ENCODE measurements at regions of chr20 and their contacts with region 1.

Region 1: DNA sequence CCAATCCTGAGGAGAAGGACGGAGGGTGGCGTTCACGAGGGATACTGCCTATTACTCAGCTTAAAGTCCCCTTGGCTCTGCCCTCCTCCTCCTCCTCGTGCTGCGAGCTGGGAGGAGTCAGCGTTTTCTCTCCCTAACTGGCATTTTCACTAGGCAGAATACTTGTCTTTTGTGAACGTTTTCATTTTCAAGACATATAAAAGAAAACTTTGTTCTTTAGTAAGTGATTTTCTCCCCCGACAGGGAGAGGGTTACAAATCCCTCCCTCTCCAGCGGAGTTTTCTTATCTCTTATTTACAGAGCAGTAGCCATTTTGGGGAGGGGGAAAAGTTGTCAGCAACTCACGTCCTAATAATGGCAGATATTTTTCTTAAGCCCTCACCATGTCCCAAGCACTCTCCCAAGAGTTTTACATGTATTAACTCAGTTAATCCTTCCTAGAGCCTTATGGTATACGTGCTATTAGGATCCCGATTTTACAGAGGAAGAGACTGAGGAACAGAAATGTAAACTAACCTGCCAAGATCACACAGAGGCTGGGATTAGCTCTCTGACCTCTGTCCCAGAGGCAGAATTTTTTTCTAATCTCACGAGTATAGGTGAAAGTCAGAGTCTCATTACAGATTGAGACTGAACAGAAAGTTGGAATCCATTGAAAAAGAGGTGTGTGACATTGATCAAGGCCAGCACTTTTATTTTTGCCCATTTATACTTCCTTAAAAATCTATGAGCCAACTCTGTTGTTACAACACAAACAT is 30.0 kb upstream of the ZNF217 start:
- DNase-seq: peak; percentile 57 to 64 (median 64)
- H3K4me3 ChIP-seq: peak overlapping the region in 6 of 7 experiments; percentile 45 to 73 (median 58)
- H3K27ac ChIP-seq: peak overlapping the region; percentile 82 to 92
- H3K4me1 ChIP-seq: peaks cover 29 to 58% (median 50%) of the 10 kb centered on the region in 4 experiments
- H3K27me3 ChIP-seq: no peaks in the 10 kb centered on the region

Region 2: DNA sequence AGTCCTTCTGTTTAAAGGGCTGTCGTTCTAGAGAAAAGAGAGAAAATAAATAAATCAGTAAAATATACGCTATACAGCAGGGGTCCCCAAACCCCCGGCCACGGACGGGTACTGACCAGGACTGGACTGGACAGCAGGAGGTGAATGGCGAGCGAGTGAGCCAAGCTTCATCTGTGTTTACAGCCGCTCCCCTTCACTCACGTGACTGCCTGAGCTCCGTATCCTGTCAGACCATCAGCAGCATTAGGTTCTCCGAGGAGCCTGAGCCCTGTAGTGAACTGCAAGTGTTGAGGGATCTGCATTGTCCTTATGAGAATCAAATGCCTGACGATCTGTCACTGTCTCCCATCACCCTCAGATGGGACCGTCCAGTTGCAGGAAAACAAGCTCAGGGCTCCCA is 106.5 kb before region 1 on chr20:
- CTCF ChIA-PET with region 1: no interaction called
- POLR2A ChIA-PET with region 1: no interaction called
- DNase-seq: no peak
- H3K4me3 ChIP-seq: no peak overlapping the region
- H3K27ac ChIP-seq: no peak overlapping the region
- H3K4me1 ChIP-seq: no peaks in the 10 kb centered on the region
- H3K27me3 ChIP-seq: no peaks in the 10 kb centered on the region

Region 3: DNA sequence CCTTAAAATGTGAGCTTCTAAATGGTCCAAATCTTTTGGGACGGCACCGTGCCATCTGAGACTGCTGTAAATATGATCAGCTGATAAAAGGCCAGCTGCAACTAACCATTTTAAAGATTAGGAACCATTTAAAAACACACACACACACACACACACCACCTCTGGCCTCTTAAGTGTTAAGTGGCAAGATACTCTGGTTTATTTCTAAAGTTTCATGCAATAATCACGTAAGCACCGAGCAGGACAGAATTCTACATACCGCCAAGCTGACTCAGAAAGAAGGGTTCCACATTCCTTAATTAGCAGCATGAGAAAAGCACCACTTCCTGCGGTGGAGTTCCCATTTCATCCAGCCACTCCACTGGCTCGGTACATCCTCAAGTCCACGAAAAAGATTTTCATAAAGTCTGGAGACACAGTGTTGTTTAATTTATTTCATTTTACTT is 12.2 kb before region 1 on chr20:
- CTCF ChIA-PET with region 1: interaction called, 30 read pairs
- POLR2A ChIA-PET with region 1: interaction called, 11 read pairs
- DNase-seq: peak in 2 of 3 donors; percentile 59 to 75
- H3K4me3 ChIP-seq: peak overlapping the region in 4 of 7 experiments; percentile 5 to 67 (median 30)
- H3K27ac ChIP-seq: peak overlapping the region in 1 of 2 experiments; percentile 64
- H3K4me1 ChIP-seq: peaks cover 20 to 43% (median 32%) of the 10 kb centered on the region in 4 experiments
- H3K27me3 ChIP-seq: no peaks in the 10 kb centered on the region

Region 4: GRCh38 chr20:53635221-53635924 is 11.7 kb after region 1 on chr20:
- CTCF ChIA-PET with region 1: interaction called, 10 read pairs
- POLR2A ChIA-PET with region 1: interaction called, 3 read pairs
- DNase-seq: peak in 2 of 3 donors; percentile 42 to 55
- H3K4me3 ChIP-seq: peak overlapping the region in 1 of 7 experiments; percentile 10
- H3K27ac ChIP-seq: no peak overlapping the region
- H3K4me1 ChIP-seq: peaks cover 0 to 42% (median 11%) of the 10 kb centered on the region in 4 experiments
- H3K27me3 ChIP-seq: no peaks in the 10 kb centered on the region

Region 5: GRCh38 chr20:53718142-53719021 is 94.7 kb after region 1 on chr20:
- CTCF ChIA-PET with region 1: no interaction called
- POLR2A ChIA-PET with region 1: no interaction called
- DNase-seq: no peak
- H3K4me3 ChIP-seq: no peak overlapping the region
- H3K27ac ChIP-seq: no peak overlapping the region
- H3K4me1 ChIP-seq: peaks cover 0 to 10% (median 1%) of the 10 kb centered on the region in 4 experiments
- H3K27me3 ChIP-seq: no peaks in the 10 kb centered on the region